ENCODE measurements at regions of chr20 and their contacts with region 1.

Region 1: GRCh38 chr20:31943052-31943471 is 8.8 kb downstream of the PDRG1 start:
- DNase-seq: no peak
- H3K4me3 ChIP-seq: no peak overlapping the region
- H3K27ac ChIP-seq: no peak overlapping the region
- H3K4me1 ChIP-seq: peaks cover 5% of the 10 kb centered on the region
- H3K27me3 ChIP-seq: no peaks in the 10 kb centered on the region
- CTCF ChIP-seq: no peak

Region 2: GRCh38 chr20:31859998-31860709 is 82.9 kb before region 1 on chr20:
- CTCF ChIA-PET with region 1: no interaction called
- dilution Hi-C with region 1: loop called (anchors 5 kb)
- in situ Hi-C with region 1: no loop called
- intact Hi-C with region 1: no loop called
- DNase-seq: peak; percentile 40
- H3K4me3 ChIP-seq: no peak overlapping the region
- H3K27ac ChIP-seq: no peak overlapping the region
- H3K4me1 ChIP-seq: peaks cover 10% of the 10 kb centered on the region
- H3K27me3 ChIP-seq: peaks cover 3% of the 10 kb centered on the region
- CTCF ChIP-seq: no peak

Region 3: GRCh38 chr20:31881945-31882344 is 61.1 kb before region 1 on chr20:
- CTCF ChIA-PET with region 1: no interaction called
- dilution Hi-C with region 1: loop called (anchors 5 kb)
- in situ Hi-C with region 1: no loop called
- intact Hi-C with region 1: no loop called
- DNase-seq: no peak
- H3K4me3 ChIP-seq: no peak overlapping the region
- H3K27ac ChIP-seq: no peak overlapping the region
- H3K4me1 ChIP-seq: no peaks in the 10 kb centered on the region
- H3K27me3 ChIP-seq: no peaks in the 10 kb centered on the region
- CTCF ChIP-seq: no peak

Region 4: GRCh38 chr20:32024683-32025295 is 81.7 kb after region 1 on chr20:
- CTCF ChIA-PET with region 1: no interaction called
- dilution Hi-C with region 1: loop called (anchors 5 kb)
- in situ Hi-C with region 1: no loop called
- intact Hi-C with region 1: no loop called
- DNase-seq: no peak
- H3K4me3 ChIP-seq: no peak overlapping the region
- H3K27ac ChIP-seq: no peak overlapping the region
- H3K4me1 ChIP-seq: no peaks in the 10 kb centered on the region
- H3K27me3 ChIP-seq: peaks cover 3% of the 10 kb centered on the region
- CTCF ChIP-seq: no peak

Measured in mammary epithelial cell (primary cell).